ENCODE measurements at regions of chr11 and their contacts with region 1.

Region 1: DNA sequence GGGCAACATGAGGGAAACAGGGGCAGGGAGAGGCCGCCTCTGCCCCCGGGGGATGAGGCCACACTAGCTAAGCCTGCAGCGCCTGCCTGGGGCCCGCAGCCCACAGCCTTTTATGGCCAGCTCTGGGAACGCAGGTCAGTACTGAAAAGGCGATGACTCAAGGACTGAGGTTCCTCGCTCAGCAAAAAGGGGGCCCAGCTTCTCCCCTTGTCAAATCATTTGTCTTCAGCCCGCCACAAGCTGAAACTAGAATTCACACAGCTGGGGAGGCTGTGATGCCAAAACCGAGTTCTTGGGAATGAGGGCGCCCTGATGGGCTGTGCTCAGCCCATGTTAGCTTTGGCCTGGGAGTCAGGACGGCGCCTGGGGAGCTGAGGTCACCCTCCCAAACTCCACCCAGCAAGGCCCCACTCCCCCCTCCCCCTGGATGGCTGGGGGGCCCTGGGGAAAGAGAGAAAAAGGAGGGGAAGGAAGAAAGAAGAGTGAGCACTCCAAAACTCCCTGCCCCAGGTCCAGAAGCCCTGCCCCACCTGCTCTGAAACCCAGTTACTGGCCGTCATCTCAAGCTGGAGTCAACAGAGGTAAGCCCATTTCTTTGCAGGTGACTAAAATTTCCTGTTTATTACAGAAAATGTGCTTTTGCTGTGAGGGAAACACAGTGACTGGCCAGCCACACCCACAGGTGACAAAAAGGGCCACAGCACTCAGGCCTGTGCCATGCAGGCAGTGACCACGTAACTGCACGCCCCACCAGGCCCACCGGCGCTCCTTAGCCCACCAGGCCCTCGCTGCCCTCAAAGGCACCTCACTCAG is 13.7 kb downstream of the EHD1 start:
- DNase-seq: peak; percentile 93
- H3K4me3 ChIP-seq: peak overlapping the region; percentile 32
- H3K27ac ChIP-seq: peak overlapping the region; percentile 99
- H3K27me3 ChIP-seq: no peaks in the 10 kb centered on the region
- CTCF ChIP-seq: no peak

Region 2: DNA sequence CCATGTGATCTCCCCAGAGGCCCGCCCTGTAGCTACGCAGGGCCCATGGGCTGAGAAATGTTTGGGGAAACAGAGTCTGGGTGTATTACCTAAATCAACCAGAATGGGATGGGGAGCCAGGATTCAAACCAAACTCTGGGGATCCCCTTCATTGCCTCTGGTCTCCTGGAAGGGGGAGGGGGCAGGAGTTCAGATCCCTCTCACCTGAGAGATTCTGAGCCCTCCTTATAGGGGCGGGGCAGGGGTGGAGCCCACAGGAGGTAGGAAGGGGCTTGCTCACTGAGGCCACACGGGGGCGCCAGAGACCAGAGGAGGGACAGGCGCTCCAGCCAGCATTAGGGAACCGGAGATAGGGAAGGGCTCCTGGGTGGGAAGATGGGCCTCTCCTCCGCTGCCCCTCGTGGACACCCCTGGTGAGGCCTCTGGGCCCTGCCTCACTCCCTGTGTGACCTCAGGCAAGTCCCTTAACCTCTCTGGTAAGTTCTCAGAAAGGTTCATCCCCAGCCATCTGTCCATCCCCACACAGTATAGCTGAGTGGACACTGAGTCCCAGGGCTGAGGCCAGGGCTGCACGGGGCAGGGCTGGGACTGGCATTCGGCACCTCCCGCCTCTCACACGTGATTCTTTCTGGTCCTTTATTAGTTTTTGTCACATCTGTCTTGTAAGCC is 17.5 kb before region 1 on chr11:
- CTCF ChIA-PET with region 1: interaction called, 11 read pairs
- POLR2A ChIA-PET with region 1: interaction called, 6 read pairs
- DNase-seq: peak; percentile 63
- H3K4me3 ChIP-seq: no peak overlapping the region
- H3K27ac ChIP-seq: peak overlapping the region; percentile 21
- H3K27me3 ChIP-seq: no peaks in the 10 kb centered on the region
- CTCF ChIP-seq: peak; percentile 96

Region 3: GRCh38 chr11:64878494-64879243 is 14.0 kb after region 1 on chr11 and contains the start of gene EHD1:
- CTCF ChIA-PET with region 1: interaction called, 5 read pairs
- POLR2A ChIA-PET with region 1: interaction called, 105 read pairs
- DNase-seq: peak; percentile 94
- H3K4me3 ChIP-seq: peak within 1 kb of the TSS; percentile 99
- H3K27ac ChIP-seq: peak within 1 kb of the TSS; percentile 65
- H3K27me3 ChIP-seq: no peaks in the 10 kb centered on the region
- CTCF ChIP-seq: peak; percentile 64
- polyA plus RNA-seq, gene EHD1: 56.1 and 77.7 TPM in 2 replicates

Region 4: DNA sequence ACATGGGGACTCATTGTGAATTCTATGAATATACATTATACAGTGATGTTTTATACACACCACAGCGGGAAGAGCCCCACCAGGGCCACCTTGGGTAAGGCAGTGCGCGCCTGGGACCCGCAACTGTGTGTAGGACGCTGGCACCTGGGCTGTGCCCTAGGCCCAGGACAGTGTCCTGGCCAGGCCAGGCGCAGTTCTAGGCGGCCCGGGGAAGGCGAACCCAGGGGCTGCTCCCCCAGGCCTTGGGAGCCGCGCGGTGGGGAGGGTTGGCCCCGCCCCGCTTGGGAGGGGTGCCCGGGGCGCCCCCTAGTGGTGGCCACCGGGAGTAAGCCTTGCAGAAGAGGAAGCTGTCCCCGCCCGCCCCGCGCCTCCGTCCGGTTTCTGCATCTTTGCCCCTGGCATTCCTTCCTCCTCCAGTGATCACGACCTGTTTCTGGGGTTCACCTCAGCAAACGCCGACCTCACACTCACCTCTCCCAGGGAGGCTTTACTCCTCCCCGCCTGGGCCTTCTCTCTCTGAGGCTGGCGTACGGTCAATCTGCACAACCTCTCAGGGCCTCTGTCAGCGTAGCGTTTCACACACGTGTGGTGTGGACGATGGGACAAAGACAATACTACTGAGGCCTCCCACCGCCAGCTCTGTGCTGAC is 23.2 kb after region 1 on chr11:
- CTCF ChIA-PET with region 1: interaction called, 19 read pairs
- POLR2A ChIA-PET with region 1: interaction called, 6 read pairs
- DNase-seq: no peak
- H3K4me3 ChIP-seq: no peak overlapping the region
- H3K27ac ChIP-seq: no peak overlapping the region
- H3K27me3 ChIP-seq: no peaks in the 10 kb centered on the region
- CTCF ChIP-seq: peak; percentile 81

Region 5: DNA sequence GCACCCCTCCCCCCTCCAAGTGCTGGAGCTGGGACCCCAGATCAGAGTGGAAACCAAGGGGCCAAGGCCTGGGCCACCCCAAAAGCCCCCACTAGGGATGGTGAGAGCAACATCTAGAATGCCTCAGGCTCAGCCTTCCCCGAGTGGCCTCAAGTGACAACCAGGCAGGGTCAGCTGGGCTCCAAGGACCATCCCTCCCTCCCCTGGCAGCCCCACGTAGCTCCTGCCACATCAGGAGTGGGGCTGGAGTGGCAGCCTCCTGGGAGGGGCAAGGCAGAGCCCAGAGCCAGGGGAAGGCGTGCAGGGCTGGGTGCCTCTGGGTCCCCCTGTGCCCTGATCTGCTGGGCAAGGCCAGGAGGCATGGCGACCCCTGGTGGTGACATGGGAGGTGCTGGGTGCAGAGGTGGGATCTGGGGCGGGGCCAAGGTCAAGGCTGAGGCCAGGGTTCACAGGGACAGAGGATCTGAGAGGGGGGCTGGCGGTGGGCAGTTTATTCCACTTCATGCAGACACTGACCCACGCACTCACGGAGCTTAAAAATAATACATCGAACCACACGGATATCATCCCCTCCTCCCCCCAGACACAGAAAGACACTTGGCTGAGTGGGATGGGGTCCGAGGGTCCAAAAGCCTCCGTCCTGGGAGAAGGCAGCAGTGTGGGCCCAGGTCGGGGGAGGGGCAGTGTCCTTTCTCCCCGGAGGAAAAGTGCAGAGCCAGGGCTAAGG is 29.6 kb after region 1 on chr11:
- CTCF ChIA-PET with region 1: interaction called, 12 read pairs
- POLR2A ChIA-PET with region 1: no interaction called
- DNase-seq: no peak
- H3K4me3 ChIP-seq: no peak overlapping the region
- H3K27ac ChIP-seq: no peak overlapping the region
- H3K27me3 ChIP-seq: no peaks in the 10 kb centered on the region
- CTCF ChIP-seq: peak; percentile 87